ENCODE measurements at regions of chr11 and their contacts with region 1.

Region 1: GRCh38 chr11:61792310-61793085 is at the starts of genes FEN1 and TMEM258:
- DNase-seq: peak; percentile 88
- H3K4me3 ChIP-seq: peak within 1 kb of the TSS; percentile 96
- H3K27ac ChIP-seq: peak within 1 kb of the TSS; percentile 100
- H3K27me3 ChIP-seq: no peaks in the 10 kb centered on the region
- CTCF ChIP-seq: no peak
- polyA plus RNA-seq, gene FEN1: 7.1 and 8.4 TPM in 2 replicates
- polyA plus RNA-seq, gene TMEM258: 300 and 356 TPM in 2 replicates

Region 2: GRCh38 chr11:61747192-61747966 is 45.1 kb before region 1 on chr11:
- CTCF ChIA-PET with region 1: interaction called, 29 read pairs
- POLR2A ChIA-PET with region 1: interaction called, 5 read pairs
- DNase-seq: no peak
- H3K4me3 ChIP-seq: no peak overlapping the region
- H3K27ac ChIP-seq: no peak overlapping the region
- H3K27me3 ChIP-seq: no peaks in the 10 kb centered on the region
- CTCF ChIP-seq: peak; percentile 93

Region 3: GRCh38 chr11:61816736-61817455 is 24.4 kb after region 1 on chr11 and contains the start of gene FADS1:
- CTCF ChIA-PET with region 1: interaction called, 68 read pairs
- POLR2A ChIA-PET with region 1: interaction called, 13 read pairs
- DNase-seq: peak; percentile 89
- H3K4me3 ChIP-seq: peak within 1 kb of the TSS; percentile 89
- H3K27ac ChIP-seq: peak within 1 kb of the TSS; percentile 86
- H3K27me3 ChIP-seq: no peaks in the 10 kb centered on the region
- CTCF ChIP-seq: peak; percentile 57
- polyA plus RNA-seq, gene FADS1: 50.4 and 52.4 TPM in 2 replicates

Region 4: GRCh38 chr11:61871158-61871597 is 78.7 kb after region 1 on chr11:
- CTCF ChIA-PET with region 1: interaction called, 13 read pairs
- POLR2A ChIA-PET with region 1: interaction called, 3 read pairs
- DNase-seq: peak; percentile 36
- H3K4me3 ChIP-seq: peak overlapping the region; percentile 43
- H3K27ac ChIP-seq: no peak overlapping the region
- H3K27me3 ChIP-seq: peaks cover 2% of the 10 kb centered on the region
- CTCF ChIP-seq: peak; percentile 91

Region 5: DNA sequence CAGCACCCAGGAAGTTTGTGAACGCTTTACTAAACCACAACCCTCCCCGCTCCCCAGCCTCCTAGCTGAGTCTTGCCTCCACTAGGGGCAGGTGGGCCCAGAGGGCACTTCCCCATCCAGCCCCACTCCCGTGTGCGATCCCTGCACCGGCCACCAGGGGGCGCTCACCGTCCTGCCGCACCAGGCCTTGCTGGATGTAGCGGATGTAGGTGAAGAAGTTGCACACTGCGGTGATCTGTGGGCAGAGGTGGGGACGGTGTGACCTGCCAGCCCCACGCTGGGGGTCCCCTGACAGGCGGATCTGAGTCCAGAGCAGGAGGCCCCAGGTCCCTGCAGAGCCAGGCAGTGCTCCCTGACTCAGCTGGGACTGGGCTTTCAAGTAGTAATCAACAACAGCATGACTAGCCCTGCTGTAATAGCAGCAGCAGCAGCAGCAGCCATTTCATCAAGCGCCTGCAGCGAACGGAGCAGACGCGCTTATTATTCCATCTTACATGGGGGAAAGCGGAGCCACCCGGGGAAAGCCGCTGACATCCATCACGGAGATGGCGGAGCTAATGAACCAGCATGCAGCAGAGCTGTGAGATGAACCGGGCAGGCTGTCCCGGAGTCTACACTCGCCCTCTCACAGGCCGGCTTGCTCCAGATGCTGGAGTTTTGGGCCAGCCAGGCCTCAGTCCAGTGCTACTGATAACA is 106.8 kb after region 1 on chr11:
- CTCF ChIA-PET with region 1: interaction called, 45 read pairs
- POLR2A ChIA-PET with region 1: no interaction called
- DNase-seq: no peak
- H3K4me3 ChIP-seq: no peak overlapping the region
- H3K27ac ChIP-seq: no peak overlapping the region
- H3K27me3 ChIP-seq: no peaks in the 10 kb centered on the region
- CTCF ChIP-seq: peak; percentile 99

Region 6: DNA sequence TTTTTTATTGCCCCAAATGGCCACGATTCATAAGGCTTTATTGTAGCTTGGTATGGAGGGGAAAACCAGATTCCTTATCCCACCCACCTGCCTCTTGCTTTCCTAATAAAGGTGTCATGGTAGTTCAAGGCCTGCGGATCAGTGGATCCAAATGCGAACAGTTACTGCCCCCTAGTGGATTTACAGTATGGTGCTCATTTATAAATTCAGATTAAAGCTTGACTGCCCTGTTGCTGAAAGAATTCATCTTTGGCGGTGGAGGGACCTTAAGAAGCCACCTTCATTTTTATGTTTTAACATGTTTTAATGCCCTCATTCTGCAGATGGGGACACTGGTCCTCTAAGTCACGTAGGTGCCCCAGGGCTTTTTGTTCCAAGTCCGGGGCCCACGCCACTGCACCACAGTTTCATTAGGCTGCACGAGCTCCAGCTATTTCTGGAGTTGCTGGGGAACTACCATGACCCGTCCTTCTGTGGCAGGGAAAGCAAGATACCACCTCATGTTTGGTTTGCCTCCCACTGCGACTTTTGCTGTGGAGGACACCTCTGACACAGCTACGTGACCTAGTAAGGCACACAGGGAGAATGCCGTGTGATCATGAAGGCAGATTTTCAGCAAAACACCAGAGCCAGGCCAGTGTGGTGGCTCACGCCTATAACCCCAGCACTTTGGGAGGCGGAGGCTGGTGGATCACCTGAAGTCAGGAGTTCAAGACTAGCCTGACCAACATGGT is 315.7 kb after region 1 on chr11:
- CTCF ChIA-PET with region 1: interaction called, 168 read pairs
- POLR2A ChIA-PET with region 1: interaction called, 3 read pairs
- DNase-seq: no peak
- H3K4me3 ChIP-seq: no peak overlapping the region
- H3K27ac ChIP-seq: no peak overlapping the region
- H3K27me3 ChIP-seq: no peaks in the 10 kb centered on the region
- CTCF ChIP-seq: peak; percentile 79